Endothelial cell of umbilical vein (primary cell): ENCODE measurements at regions of chr9 and their contacts with region 1.

Region 1: DNA sequence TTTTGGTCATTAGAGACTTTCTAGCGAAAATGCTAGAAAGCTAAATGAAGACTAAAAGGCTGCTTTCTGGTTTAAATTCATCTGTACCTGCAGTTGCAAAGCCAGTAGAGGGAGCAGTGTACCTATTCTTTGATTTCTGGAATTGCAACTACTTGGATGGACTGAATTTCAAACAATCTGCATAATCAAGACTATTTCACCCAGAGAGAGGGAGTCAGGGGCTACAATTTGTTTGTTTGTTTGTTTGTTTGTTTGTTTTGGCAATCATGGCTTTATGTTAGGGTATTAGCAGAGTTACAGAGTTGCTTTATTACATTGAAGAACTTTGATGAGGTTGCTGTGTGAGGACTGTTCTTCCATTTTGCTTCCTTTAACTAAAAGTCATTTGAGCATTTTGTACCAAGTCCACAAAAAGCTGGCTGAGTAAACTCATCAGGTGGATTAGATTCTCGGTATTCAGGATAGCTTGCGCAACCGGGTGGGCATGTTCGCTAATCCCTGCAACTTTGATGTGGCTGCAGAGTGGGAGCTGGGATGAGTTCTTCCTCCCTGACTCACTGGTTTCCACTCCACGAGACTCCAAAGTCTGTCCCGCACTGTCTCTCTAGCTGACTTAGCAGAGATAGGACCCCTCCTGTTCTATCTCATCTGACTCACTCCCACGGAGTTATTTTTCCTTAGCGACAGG is 80.0 kb upstream of the TUT7 start:
- DNase-seq: peak; percentile 38
- H3K4me3 ChIP-seq: no peak overlapping the region
- H3K27ac ChIP-seq: no peak overlapping the region
- H3K4me1 ChIP-seq: no peaks in the 10 kb centered on the region
- H3K27me3 ChIP-seq: no peaks in the 10 kb centered on the region
- CTCF ChIP-seq: peak; percentile 46 to 57
- POLR2A ChIP-seq: no peak

Region 2: GRCh38 chr9:85884256-85884655 is 549.9 kb before region 1 on chr9:
- CTCF ChIA-PET with region 1: no interaction called
- POLR2A ChIA-PET with region 1: no interaction called
- dilution Hi-C with region 1: no loop called
- intact Hi-C with region 1: no loop called
- DNase-seq: no peak
- H3K4me3 ChIP-seq: no peak overlapping the region
- H3K27ac ChIP-seq: no peak overlapping the region
- H3K4me1 ChIP-seq: no peaks in the 10 kb centered on the region
- H3K27me3 ChIP-seq: no peaks in the 10 kb centered on the region
- CTCF ChIP-seq: no peak
- POLR2A ChIP-seq: no peak

Region 3: GRCh38 chr9:86217076-86217755 is 217.0 kb before region 1 on chr9:
- CTCF ChIA-PET with region 1: no interaction called
- POLR2A ChIA-PET with region 1: no interaction called
- dilution Hi-C with region 1: no loop called
- intact Hi-C with region 1: no loop called
- DNase-seq: no peak
- H3K4me3 ChIP-seq: no peak overlapping the region
- H3K27ac ChIP-seq: no peak overlapping the region
- H3K4me1 ChIP-seq: no peaks in the 10 kb centered on the region
- H3K27me3 ChIP-seq: no peaks in the 10 kb centered on the region
- CTCF ChIP-seq: no peak
- POLR2A ChIP-seq: no peak

Region 4: GRCh38 chr9:86389628-86390027 is 44.6 kb before region 1 on chr9:
- CTCF ChIA-PET with region 1: no interaction called
- POLR2A ChIA-PET with region 1: no interaction called
- dilution Hi-C with region 1: no loop called
- intact Hi-C with region 1: no loop called
- DNase-seq: no peak
- H3K4me3 ChIP-seq: no peak overlapping the region
- H3K27ac ChIP-seq: no peak overlapping the region
- H3K4me1 ChIP-seq: no peaks in the 10 kb centered on the region
- H3K27me3 ChIP-seq: no peaks in the 10 kb centered on the region
- CTCF ChIP-seq: no peak
- POLR2A ChIP-seq: no peak

Region 5: DNA sequence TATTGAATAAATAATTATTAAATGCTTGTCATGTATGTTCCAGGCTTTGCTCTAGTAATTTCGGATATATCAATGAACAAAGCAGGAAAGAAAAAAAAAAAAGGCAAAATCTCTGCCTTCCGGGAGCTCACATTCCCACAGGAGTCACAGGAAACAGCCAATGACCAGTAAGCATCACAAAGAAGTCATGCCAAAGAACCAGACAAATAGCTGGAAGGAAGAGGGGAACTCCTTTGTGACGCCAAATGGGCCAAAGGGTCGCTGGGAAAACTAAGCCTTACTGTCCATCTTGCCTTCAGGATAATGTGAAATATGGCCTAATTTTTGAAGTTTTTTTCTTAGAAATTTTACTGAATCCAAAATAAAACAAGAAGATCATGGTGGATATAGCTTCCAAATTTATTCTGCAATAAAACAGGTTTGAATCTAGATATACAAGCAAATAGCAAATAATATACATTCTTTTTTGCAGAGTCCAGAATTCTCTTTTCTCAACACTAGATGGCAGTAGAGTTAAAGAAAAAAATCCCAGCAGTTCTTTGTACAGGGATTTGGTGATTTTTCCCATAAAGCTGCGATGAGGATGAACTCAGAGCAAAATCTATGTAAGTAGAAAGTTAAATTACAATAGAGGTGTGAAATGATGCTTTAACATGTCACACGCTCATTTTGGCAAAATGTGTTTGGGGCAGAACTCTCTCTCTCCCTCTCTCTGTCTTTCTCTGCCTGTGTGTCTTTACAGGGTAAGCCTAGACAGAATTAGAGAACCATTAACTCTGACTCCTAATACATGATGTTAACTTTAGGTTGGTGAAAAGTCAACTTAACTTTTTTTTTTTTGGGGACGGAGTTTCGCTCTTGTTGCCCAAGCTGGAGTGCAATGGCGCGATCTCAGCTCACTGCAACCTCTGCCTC is 20.0 kb before region 1 on chr9:
- CTCF ChIA-PET with region 1: interaction called, 27 read pairs
- POLR2A ChIA-PET with region 1: no interaction called
- dilution Hi-C with region 1: no loop called
- intact Hi-C with region 1: no loop called
- DNase-seq: peak; percentile 47
- H3K4me3 ChIP-seq: no peak overlapping the region
- H3K27ac ChIP-seq: no peak overlapping the region
- H3K4me1 ChIP-seq: no peaks in the 10 kb centered on the region
- H3K27me3 ChIP-seq: no peaks in the 10 kb centered on the region
- CTCF ChIP-seq: peak; percentile 30 to 31
- POLR2A ChIP-seq: no peak

Region 6: DNA sequence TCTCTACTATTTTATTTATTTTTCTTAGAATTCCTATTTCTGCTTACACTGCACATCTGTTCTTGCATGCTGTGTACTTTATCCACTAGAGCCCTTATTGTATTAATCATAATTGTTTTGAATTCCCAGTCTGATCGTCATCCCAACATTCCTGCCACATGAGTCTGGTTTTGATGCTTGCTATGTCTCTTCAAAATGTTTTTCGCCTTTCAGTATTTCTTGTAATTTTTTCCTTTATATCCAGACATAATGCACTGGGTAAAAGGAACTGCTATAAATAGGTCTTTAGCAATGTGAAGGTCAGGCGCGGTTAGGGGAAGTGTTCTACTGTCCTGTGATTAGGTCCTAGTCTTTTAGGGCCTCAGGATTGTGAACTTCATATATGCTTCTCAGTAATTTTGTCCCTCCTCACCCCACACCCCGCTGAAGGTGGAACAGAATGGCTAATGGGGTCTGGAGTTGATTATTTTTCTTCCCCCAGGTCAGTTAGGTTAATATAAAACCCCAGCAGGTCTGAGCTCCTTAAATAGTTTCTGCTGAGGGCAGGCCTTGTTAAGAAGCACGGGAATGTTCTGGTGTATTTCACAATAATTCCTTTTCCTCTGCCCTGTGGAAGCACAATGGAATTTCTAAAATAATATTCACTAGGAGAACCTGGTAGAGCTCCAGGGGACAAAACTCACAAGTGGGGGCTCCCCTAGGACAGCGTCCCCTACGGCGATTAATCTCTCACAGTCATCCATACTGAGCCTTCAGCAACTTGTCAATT is 66.7 kb after region 1 on chr9:
- CTCF ChIA-PET with region 1: no interaction called
- POLR2A ChIA-PET with region 1: no interaction called
- dilution Hi-C with region 1: no loop called
- intact Hi-C with region 1: no loop called
- DNase-seq: no peak
- H3K4me3 ChIP-seq: no peak overlapping the region
- H3K27ac ChIP-seq: no peak overlapping the region
- H3K4me1 ChIP-seq: no peaks in the 10 kb centered on the region
- H3K27me3 ChIP-seq: no peaks in the 10 kb centered on the region
- CTCF ChIP-seq: no peak
- POLR2A ChIP-seq: no peak

Region 7: GRCh38 chr9:87662808-87663528 is 1228.8 kb after region 1 on chr9:
- CTCF ChIA-PET with region 1: interaction called, 4 read pairs
- POLR2A ChIA-PET with region 1: no interaction called
- dilution Hi-C with region 1: no loop called
- intact Hi-C with region 1: loop called (anchors 10 kb)
- DNase-seq: peak; percentile 74
- H3K4me3 ChIP-seq: no peak overlapping the region
- H3K27ac ChIP-seq: no peak overlapping the region
- H3K4me1 ChIP-seq: no peaks in the 10 kb centered on the region
- H3K27me3 ChIP-seq: no peaks in the 10 kb centered on the region
- CTCF ChIP-seq: peak; percentile 80 to 87
- POLR2A ChIP-seq: no peak